ENCODE measurements at regions of chr1 and their contacts with region 1.

Region 1: DNA sequence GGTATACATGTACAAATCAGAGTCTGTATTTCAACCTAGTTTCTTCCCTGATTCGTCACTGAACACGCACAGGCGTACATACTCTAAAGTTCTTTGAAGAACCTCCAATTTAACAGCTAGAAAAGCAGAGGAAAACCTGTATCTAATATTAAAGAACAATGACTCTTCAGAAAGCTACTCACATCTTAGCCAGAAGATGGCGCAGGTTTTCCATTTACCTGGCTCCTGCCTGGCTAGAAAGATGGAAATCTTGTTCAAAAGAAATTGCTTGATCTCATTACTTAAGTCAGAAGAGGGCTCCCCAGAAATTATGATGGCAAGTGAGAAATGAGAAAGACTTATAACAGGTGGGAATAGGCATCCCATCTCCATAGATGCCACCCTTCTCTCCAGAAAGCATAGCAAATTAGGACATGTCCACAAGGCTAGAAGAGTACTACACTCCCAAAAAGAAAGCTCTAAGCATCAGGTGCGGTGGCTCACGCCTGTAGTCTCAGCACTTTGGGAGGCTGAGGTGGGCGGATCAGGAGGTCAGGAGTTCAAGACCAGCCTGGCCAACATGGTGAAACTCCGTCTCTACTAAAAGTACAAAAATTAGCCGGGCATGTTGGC is 19.0 kb upstream of the L1TD1 start:
- DNase-seq: peak; percentile 10
- H3K4me3 ChIP-seq: no peak overlapping the region
- H3K27ac ChIP-seq: no peak overlapping the region
- H3K27me3 ChIP-seq: no peaks in the 10 kb centered on the region
- CTCF ChIP-seq: peak; percentile 74

Region 2: GRCh38 chr1:62407405-62408009 is 231.8 kb after region 1 on chr1:
- CTCF ChIA-PET with region 1: interaction called, 181 read pairs
- POLR2A ChIA-PET with region 1: no interaction called
- DNase-seq: peak; percentile 20
- H3K4me3 ChIP-seq: no peak overlapping the region
- H3K27ac ChIP-seq: no peak overlapping the region
- H3K27me3 ChIP-seq: peaks cover 3% of the 10 kb centered on the region
- CTCF ChIP-seq: peak; percentile 78

Region 3: GRCh38 chr1:62415687-62416086 is 240.0 kb after region 1 on chr1:
- CTCF ChIA-PET with region 1: interaction called, 181 read pairs
- POLR2A ChIA-PET with region 1: no interaction called
- DNase-seq: no peak
- H3K4me3 ChIP-seq: no peak overlapping the region
- H3K27ac ChIP-seq: no peak overlapping the region
- H3K27me3 ChIP-seq: no peaks in the 10 kb centered on the region
- CTCF ChIP-seq: no peak